Activated T-helper 2 cell treated with anti-CD3 and anti-CD28 coated beads, Interferon-gamma antibody, Interleukin-2, Interleukin-4, amounts not matched to agents 10 μg/mL and 5 μg/mL and 100 μg/mL, durations not matched to agents 14 hours and 24 hours and 36 hours (primary cell): ENCODE measurements at regions of chr6 and their contacts with region 1.

Region 1: DNA sequence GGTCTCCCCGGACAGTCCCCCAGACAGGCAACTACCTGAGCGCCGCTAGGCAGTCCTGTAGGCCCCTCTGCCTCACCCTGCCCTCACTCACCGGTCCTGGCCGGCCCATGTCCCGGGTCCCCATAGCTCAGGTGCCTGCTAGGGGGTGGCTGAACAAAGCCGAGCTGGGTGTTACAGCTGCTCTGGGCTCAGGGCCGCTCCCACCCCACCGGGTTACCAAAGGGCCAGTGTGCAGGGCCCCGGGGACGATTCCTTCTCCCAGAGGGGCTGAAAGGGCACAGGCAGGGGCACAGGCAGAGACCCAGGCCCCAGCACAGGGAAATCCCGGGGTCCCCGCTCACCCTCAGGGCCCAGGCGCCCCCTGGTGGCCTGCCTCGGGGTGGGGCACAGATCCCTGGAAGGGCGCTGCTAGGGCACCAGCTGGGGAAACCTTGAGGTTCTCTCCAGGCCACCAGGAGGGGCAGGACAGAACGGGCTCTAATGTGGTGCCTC is 118.4 kb downstream of the GRM4 start:
- DNase-seq: peak; percentile 33
- H3K4me3 Mint-ChIP-seq: no peak overlapping the region
- H3K27ac Mint-ChIP-seq: no peak overlapping the region
- H3K4me1 Mint-ChIP-seq: no peaks in the 10 kb centered on the region
- H3K27me3 Mint-ChIP-seq: peaks cover 2% of the 10 kb centered on the region

Region 2: GRCh38 chr6:33851959-33852358 is 175.5 kb before region 1 on chr6:
- intact Hi-C with region 1: loop called (anchors 5 kb)
- DNase-seq: no peak
- H3K4me3 Mint-ChIP-seq: no peak overlapping the region
- H3K27ac Mint-ChIP-seq: no peak overlapping the region
- H3K4me1 Mint-ChIP-seq: peaks cover 9% of the 10 kb centered on the region
- H3K27me3 Mint-ChIP-seq: peaks cover 35% of the 10 kb centered on the region